HCT116 (cell line): ENCODE measurements at regions of chr6 and their contacts with region 1.

Region 1: GRCh38 chr6:26322645-26323482 is 42.1 kb upstream of the BTN3A2 start:
- DNase-seq: peak; percentile 82
- ATAC-seq: peak; percentile 68
- H3K4me3 ChIP-seq: peak overlapping the region; percentile 54 to 61; a peak in 3 of 4 replicates
- H3K27ac ChIP-seq: peak overlapping the region; percentile 81
- H3K4me1 ChIP-seq: peaks cover 8 to 38% of the 10 kb centered on the region in 2 experiments
- H3K27me3 ChIP-seq: no peaks in the 10 kb centered on the region
- CTCF ChIP-seq: no peak
- POLR2A ChIP-seq: no peak
- RAD21 ChIP-seq: no peak

Region 2: DNA sequence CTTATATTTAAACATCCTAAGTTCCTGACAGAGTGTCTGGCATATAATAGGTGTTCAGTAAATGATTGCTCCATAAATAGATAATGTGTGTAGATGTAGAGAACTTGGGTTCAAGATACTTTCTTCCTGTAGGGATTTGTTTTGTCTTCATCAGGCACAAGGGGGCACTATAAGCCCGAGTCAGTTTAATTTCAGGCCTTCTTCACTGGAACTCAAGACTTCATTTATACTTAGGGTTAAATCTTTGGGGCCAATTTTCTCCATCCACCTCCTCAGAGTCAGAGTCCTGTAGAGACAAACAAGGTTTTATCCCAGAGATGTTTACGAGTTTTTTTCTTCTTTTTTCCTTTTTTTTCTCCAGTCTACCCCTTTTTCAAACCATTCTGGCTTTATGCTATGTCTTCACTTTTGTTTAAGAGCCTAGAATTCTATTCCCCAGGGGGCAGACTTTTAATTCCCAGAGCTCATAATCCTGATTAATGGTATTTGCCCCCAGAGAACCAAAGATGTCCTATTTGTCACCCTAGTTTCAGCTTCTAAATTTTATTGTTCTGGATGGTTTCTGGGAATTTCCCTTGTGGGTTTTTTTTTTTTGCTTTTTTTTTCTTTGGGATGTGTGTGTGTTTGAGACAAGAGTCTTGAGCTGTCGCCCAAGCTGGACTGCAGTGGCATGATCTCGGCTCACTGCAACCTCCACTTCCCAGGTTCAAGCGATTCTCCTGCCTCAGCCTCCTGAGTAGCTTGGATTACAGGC is 147.3 kb before region 1 on chr6:
- CTCF ChIA-PET with region 1: no interaction called
- POLR2A ChIA-PET with region 1: no interaction called
- RAD21 ChIA-PET with region 1: no interaction called
- intact Hi-C with region 1: loop called (anchors 5 kb)
- DNase-seq: no peak
- ATAC-seq: no peak
- H3K4me3 ChIP-seq: no peak overlapping the region
- H3K27ac ChIP-seq: peak overlapping the region; percentile 46; the same call in 1 of the 2 replicates
- H3K4me1 ChIP-seq: peaks cover 11 to 28% of the 10 kb centered on the region in 2 experiments
- H3K27me3 ChIP-seq: no peaks in the 10 kb centered on the region
- CTCF ChIP-seq: peak; percentile 62 to 75 (median 73)
- POLR2A ChIP-seq: no peak
- RAD21 ChIP-seq: peak; percentile 83

Region 3: DNA sequence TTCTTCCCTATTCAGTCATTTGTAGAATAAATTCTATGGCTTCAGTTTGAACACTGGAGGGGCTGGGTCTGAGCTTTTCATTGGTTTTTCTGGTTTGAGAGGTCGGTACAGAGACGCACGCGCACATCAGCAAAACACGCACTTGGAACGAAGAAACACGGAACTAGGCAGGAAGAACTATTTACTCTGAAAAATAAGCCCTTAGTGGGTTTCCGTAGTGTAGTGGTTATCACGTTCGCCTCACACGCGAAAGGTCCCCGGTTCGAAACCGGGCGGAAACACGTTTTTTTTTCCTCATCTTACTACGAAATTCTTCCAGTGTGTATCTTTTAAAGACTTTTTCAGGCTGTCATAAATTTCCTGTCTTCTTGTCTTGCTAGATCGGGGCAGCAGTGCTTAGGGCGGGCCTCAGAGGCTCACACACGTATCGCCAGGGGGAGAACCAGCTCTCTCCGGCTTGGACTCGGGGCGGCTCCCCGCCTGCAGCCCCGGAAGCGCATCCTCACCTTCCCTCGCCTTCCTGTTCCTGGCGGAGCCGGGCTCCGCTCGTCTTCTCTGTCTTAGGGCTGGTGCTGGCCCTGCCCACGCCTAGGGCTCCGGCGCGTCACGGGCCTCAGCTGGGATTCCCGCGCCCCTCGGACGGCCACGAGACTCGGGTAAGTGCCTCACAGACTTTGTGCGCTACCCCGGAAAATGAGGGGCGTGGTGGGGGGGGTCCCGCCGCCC is 215.1 kb after region 1 on chr6 and contains the start of gene HMGN4:
- CTCF ChIA-PET with region 1: no interaction called
- POLR2A ChIA-PET with region 1: interaction called, 3 read pairs
- RAD21 ChIA-PET with region 1: no interaction called
- intact Hi-C with region 1: loop called (anchors 1 kb)
- DNase-seq: peak; percentile 81
- ATAC-seq: peak; percentile 73
- H3K4me3 ChIP-seq: peak within 1 kb of the TSS; percentile 74 to 89
- H3K27ac ChIP-seq: peak within 1 kb of the TSS; percentile 72
- H3K4me1 ChIP-seq: peaks cover 14 to 51% of the 10 kb centered on the region in 2 experiments
- H3K27me3 ChIP-seq: no peaks in the 10 kb centered on the region
- CTCF ChIP-seq: no peak
- POLR2A ChIP-seq: no peak
- RAD21 ChIP-seq: 0 out of 2 replicates have a peak, but pooled peaks have one; percentile 17
- total RNA-seq, gene HMGN4: 73.8 TPM

Region 4: DNA sequence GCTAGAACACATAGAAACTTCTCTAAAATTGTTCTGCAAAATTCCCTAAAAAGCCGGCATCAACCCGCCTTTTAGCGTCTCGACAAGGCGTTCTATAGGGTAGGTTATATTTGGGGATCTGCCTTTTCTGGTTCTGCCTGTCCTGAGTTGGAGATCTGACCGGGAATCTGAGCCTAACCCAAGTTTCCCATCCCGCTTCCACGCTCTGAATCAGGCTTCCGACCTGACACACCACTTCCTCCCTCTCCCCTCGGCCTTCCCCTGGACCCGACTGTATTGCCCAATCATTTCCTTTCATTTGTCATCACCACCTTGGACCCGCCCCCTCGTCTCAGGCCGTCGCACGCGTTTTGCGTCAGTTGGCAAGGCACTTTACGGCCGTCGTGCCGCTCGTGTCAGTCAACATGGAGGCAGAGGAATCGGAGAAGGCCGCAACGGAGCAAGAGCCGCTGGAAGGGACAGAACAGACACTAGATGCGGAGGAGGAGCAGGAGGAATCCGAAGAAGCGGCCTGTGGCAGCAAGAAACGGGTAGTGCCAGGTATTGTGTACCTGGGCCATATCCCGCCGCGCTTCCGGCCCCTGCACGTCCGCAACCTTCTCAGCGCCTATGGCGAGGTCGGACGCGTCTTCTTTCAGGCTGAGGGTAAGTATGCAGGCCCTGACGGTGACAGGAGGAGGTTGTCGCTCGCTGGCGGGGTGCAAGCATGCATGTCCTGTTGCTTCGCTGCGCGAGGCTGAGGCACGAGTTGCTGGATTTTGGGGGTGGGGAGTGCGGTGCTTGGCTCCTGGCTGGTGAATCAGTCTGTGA is 273.9 kb after region 1 on chr6 and contains the start of gene ABT1:
- CTCF ChIA-PET with region 1: interaction called, 31 read pairs
- POLR2A ChIA-PET with region 1: no interaction called
- RAD21 ChIA-PET with region 1: no interaction called
- intact Hi-C with region 1: no loop called
- DNase-seq: peak; percentile 97
- ATAC-seq: peak; percentile 74
- H3K4me3 ChIP-seq: peak within 1 kb of the TSS; percentile 94 to 98
- H3K27ac ChIP-seq: peak within 1 kb of the TSS; percentile 80
- H3K4me1 ChIP-seq: peaks cover 19 to 43% of the 10 kb centered on the region in 2 experiments
- H3K27me3 ChIP-seq: no peaks in the 10 kb centered on the region
- CTCF ChIP-seq: no peak
- POLR2A ChIP-seq: peak; percentile 80
- RAD21 ChIP-seq: no peak; the same call in 1 of the 2 replicates
- total RNA-seq, gene ABT1: 26.7 TPM

Region 5: DNA sequence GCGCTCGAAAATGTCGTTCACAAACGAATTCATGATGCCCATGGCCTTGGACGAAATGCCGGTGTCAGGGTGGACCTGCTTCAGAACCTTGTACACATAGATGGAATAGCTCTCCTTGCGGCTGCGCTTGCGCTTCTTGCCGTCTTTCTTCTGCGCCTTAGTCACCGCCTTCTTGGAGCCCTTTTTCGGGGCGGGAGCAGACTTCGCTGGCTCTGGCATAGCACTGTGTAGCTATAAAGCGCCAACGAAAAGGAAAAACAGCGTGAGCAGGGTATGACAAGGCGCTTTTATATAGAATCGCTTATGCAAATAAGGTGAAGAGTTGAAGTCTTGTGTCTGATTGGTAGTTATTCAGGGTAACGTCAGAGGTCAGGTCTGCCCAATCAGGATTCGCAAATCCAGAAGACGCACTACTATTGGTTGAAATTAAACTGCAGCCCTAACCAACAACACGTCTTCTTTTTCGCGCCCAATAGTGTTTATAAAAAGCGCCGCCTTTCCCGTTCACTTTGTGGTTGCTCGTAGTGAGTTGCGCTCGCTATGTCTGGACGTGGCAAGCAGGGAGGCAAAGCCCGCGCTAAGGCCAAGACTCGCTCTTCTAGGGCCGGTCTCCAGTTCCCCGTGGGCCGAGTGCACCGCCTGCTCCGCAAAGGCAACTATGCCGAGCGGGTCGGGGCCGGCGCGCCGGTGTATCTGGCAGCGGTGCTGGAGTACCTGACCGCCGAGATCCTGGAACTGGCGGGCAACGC is 809.8 kb after region 1 on chr6:
- CTCF ChIA-PET with region 1: no interaction called
- POLR2A ChIA-PET with region 1: no interaction called
- RAD21 ChIA-PET with region 1: no interaction called
- intact Hi-C with region 1: loop called (anchors 5 kb)
- DNase-seq: peak; percentile 100
- ATAC-seq: peak; percentile 75
- H3K4me3 ChIP-seq: peak overlapping the region; percentile 62 to 71
- H3K27ac ChIP-seq: peak overlapping the region; percentile 99
- H3K4me1 ChIP-seq: peaks cover 21 to 38% of the 10 kb centered on the region in 2 experiments
- H3K27me3 ChIP-seq: no peaks in the 10 kb centered on the region
- CTCF ChIP-seq: no peak
- POLR2A ChIP-seq: peak; percentile 98
- RAD21 ChIP-seq: no peak

Region 6: DNA sequence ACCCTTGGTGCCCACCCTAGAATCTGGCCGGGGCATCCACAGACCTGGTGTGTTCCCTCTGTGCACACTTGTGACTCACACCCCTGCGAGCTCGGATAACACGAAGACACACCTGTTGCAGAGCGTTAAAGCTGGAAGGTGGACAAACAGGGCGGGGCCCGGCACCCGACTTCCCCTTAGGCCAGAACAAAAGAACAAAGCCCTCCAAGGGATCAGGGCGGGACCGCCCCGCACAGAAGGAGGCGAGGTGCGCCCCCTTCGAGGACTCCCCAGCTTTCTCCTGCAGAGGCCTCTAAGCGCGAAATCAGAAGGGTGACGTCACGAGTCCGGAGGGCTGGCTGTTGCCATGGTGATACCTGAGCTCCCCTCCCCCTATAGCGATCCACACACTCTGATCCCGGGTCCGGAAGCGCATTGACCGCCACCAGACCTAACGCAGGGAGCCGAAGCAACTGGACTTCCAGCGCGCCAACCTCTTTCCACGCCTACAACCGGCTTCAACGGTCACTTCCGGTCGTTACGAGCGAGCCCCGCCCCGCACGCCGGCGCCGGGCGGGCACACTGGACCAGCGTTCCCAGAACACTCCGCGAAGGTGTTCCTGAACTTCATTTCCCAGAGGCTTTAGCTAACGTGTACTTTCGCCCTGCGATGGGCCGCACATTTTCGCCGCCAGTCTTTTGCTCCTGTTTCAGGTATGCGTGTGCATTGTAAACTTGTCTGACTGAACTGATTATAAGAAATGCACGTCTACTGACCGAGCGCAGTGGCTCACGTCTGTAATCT is 1149.9 kb after region 1 on chr6 and contains the start of gene ZNF184:
- CTCF ChIA-PET with region 1: no interaction called
- POLR2A ChIA-PET with region 1: no interaction called
- RAD21 ChIA-PET with region 1: no interaction called
- intact Hi-C with region 1: loop called (anchors 10 kb)
- DNase-seq: peak; percentile 98
- ATAC-seq: peak; percentile 92
- H3K4me3 ChIP-seq: peak within 1 kb of the TSS; percentile 68 to 75
- H3K27ac ChIP-seq: peak within 1 kb of the TSS; percentile 88
- H3K4me1 ChIP-seq: peaks cover 2 to 28% of the 10 kb centered on the region in 2 experiments; a peak in 3 of 4 replicates
- H3K27me3 ChIP-seq: no peaks in the 10 kb centered on the region
- CTCF ChIP-seq: no peak
- POLR2A ChIP-seq: peak; percentile 77
- RAD21 ChIP-seq: no peak
- total RNA-seq, gene ZNF184: 9.4 TPM